ENCODE measurements at regions of chr14 and their contacts with region 1.

Region 1: DNA sequence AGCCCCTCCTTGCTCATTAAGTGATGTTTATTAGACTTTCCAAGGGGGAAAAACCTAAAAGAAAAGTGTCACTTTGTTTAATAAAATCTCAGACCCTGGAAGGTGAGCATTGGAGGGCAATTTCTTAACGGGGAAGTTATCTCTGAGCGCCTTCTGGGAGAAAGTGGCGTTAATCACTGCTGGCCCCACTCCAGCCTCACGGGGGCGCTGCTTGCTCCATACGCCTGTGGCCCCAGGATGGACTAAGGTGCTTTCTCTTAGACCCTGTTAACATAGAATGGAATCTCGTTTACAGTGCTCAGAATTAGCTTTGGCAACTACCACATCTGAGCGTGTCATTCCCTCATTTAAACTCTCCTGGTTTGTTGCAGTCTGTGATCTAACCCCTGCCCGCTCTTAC is 16.4 kb upstream of the PRIMA1 start:
- DNase-seq: peak in 1 of 2 experiments; percentile 91
- H3K4me3 ChIP-seq: no peak overlapping the region
- H3K27ac ChIP-seq: no peak overlapping the region
- H3K4me1 ChIP-seq: no peaks in the 10 kb centered on the region
- H3K27me3 ChIP-seq: no peaks in the 10 kb centered on the region; a peak in 1 of 7 replicates
- CTCF ChIP-seq: peak; percentile 79 to 93 (median 92)
- EP300 ChIP-seq: no peak
- POLR2A ChIP-seq: no peak
- RAD21 ChIP-seq: peak; percentile 71 to 78

Region 2: DNA sequence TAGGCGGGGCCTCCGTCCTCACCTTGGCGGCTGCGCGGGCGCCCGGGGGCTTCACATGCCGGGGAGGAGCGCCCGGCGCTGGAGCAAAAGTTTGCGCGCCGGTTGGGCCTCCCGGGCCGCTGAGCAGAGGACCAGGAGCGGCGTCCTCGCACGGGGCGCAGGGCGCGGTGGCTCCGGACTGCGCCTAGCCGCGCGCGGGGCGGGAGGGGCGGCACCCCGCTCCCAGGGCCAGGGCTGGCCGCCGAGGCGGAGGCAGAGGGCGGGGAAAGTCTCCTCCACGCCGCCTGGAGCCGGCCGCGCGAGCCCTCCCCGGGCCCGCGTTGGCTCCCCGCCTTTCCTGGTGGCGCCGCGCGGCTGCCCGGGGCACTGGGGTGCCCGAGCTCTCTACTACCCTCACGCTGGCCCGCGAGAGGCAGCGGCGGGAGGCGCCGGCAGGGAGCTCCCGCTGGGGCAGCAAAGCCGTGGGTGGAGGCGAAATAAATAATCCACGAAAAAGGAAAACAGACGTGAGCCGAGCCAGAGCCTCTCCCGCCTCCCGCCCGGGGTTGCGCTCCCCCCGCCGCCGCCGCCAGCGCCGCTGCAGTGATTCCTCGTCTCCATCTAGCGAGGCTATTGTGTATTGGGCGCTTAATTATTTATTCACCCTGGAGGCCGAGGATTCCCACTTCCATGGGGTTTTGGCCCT is 16.0 kb before region 1 on chr14:
- CTCF ChIA-PET with region 1: interaction called, 48 read pairs
- POLR2A ChIA-PET with region 1: interaction called, 4 read pairs
- DNase-seq: peak in 1 of 2 experiments; percentile 74
- H3K4me3 ChIP-seq: peak overlapping the region; percentile 65 to 77 (median 70)
- H3K27ac ChIP-seq: no peak overlapping the region
- H3K4me1 ChIP-seq: peaks cover 0 to 19% (median 7%) of the 10 kb centered on the region in 4 experiments; a peak in 4 of 7 replicates
- H3K27me3 ChIP-seq: peaks cover 4 to 30% (median 23%) of the 10 kb centered on the region in 4 experiments
- CTCF ChIP-seq: peak in 1 of 3 experiments; percentile 18; a peak in 1 of 4 replicates
- EP300 ChIP-seq: no peak
- POLR2A ChIP-seq: peak in 1 of 2 experiments; percentile 66; a peak in 2 of 3 replicates
- RAD21 ChIP-seq: peak; percentile 22 to 38; a peak in 2 of 4 replicates

Region 3: GRCh38 chr14:93821051-93821450 is 16.4 kb after region 1 on chr14:
- CTCF ChIA-PET with region 1: interaction called, 16 read pairs
- POLR2A ChIA-PET with region 1: no interaction called
- DNase-seq: no peak
- H3K4me3 ChIP-seq: no peak overlapping the region
- H3K27ac ChIP-seq: no peak overlapping the region
- H3K4me1 ChIP-seq: no peaks in the 10 kb centered on the region
- H3K27me3 ChIP-seq: no peaks in the 10 kb centered on the region
- CTCF ChIP-seq: no peak
- EP300 ChIP-seq: no peak
- POLR2A ChIP-seq: no peak
- RAD21 ChIP-seq: no peak

Region 4: GRCh38 chr14:93892923-93893558 is 88.4 kb after region 1 on chr14:
- CTCF ChIA-PET with region 1: interaction called, 57 read pairs
- POLR2A ChIA-PET with region 1: interaction called, 4 read pairs
- DNase-seq: peak; percentile 46 to 98
- H3K4me3 ChIP-seq: peak overlapping the region in 1 of 4 experiments; percentile 10; a peak in 1 of 8 replicates
- H3K27ac ChIP-seq: no peak overlapping the region
- H3K4me1 ChIP-seq: peaks cover 4 to 20% (median 10%) of the 10 kb centered on the region in 4 experiments
- H3K27me3 ChIP-seq: no peaks in the 10 kb centered on the region; a peak in 1 of 7 replicates
- CTCF ChIP-seq: peak; percentile 88 to 96 (median 90)
- EP300 ChIP-seq: no peak
- POLR2A ChIP-seq: no peak
- RAD21 ChIP-seq: peak; percentile 71 to 82